K562 (cell line): ENCODE measurements at regions of chr1 and their contacts with region 1.

Region 1: GRCh38 chr1:179882243-179883039 is at the start of gene TOR1AIP1:
- DNase-seq: peak; percentile 91 to 99 (median 94)
- ATAC-seq: peak; percentile 88
- H3K4me3 ChIP-seq: peak within 1 kb of the TSS; percentile 87
- H3K27ac ChIP-seq: peak within 1 kb of the TSS; percentile 98
- H3K4me1 ChIP-seq: peaks cover 12% of the 10 kb centered on the region in 2 experiments; a peak in 4 of 5 replicates
- H3K27me3 ChIP-seq: no peaks in the 10 kb centered on the region
- CTCF ChIP-seq: peak; percentile 19 to 26 (median 20); a peak in 2 of 6 replicates
- EP300 ChIP-seq: peak; percentile 64; the same call in 1 of the 2 replicates
- POLR2A ChIP-seq: peak; percentile 98
- RAD21 ChIP-seq: peak; percentile 37 to 41
- polyA plus RNA-seq, gene TOR1AIP1: 27.1 to 38.0 TPM

Region 2: GRCh38 chr1:178774263-178774662 is 1108.2 kb before region 1 on chr1:
- CTCF ChIA-PET with region 1: no interaction called
- POLR2A ChIA-PET with region 1: no interaction called
- in situ Hi-C with region 1: no loop called
- intact Hi-C with region 1: no loop called
- DNase-seq: peak in 1 of 4 experiments; percentile 37
- ATAC-seq: peak; percentile 59; the same call in 1 of the 3 replicates
- H3K4me3 ChIP-seq: no peak overlapping the region
- H3K27ac ChIP-seq: no peak overlapping the region
- H3K4me1 ChIP-seq: no peaks in the 10 kb centered on the region
- H3K27me3 ChIP-seq: no peaks in the 10 kb centered on the region
- CTCF ChIP-seq: peak in 2 of 3 experiments; percentile 30 to 69; a peak in 3 of 6 replicates
- EP300 ChIP-seq: no peak
- POLR2A ChIP-seq: no peak
- RAD21 ChIP-seq: peak; percentile 78 to 81

Region 3: GRCh38 chr1:179803104-179803503 is 79.3 kb before region 1 on chr1:
- CTCF ChIA-PET with region 1: no interaction called
- POLR2A ChIA-PET with region 1: no interaction called
- in situ Hi-C with region 1: no loop called
- intact Hi-C with region 1: no loop called
- DNase-seq: no peak
- ATAC-seq: no peak
- H3K4me3 ChIP-seq: no peak overlapping the region
- H3K27ac ChIP-seq: no peak overlapping the region
- H3K4me1 ChIP-seq: peaks cover 0 to 4% of the 10 kb centered on the region in 2 experiments; a peak in 1 of 5 replicates
- H3K27me3 ChIP-seq: peaks cover 42 to 74% of the 10 kb centered on the region in 2 experiments
- CTCF ChIP-seq: no peak
- EP300 ChIP-seq: no peak
- POLR2A ChIP-seq: no peak
- RAD21 ChIP-seq: no peak

Region 4: DNA sequence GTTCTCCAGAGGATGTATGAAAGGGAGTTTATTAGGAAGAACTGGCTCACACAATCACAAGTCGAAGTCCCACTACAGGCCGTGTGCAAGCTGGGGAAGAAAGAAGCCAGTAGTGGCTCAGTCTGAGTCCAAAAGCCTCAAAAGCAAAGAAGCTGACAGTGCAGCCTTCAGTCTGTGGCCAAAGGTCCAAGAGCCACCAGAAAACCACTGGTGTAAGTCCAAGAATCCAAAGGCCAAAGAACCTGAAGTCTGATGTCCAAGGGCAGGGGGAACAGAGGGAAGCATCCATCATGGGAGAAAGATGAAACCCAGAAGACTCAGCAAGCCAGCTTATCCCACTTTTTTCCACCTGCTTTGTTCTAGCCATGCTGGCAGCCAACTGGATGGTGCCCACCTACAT is 50.8 kb after region 1 on chr1:
- CTCF ChIA-PET with region 1: no interaction called
- POLR2A ChIA-PET with region 1: interaction called, 10 read pairs
- in situ Hi-C with region 1: no loop called
- intact Hi-C with region 1: no loop called
- DNase-seq: no peak
- ATAC-seq: no peak
- H3K4me3 ChIP-seq: no peak overlapping the region
- H3K27ac ChIP-seq: no peak overlapping the region
- H3K4me1 ChIP-seq: peaks cover 0 to 6% of the 10 kb centered on the region in 2 experiments; a peak in 1 of 5 replicates
- H3K27me3 ChIP-seq: no peaks in the 10 kb centered on the region
- CTCF ChIP-seq: no peak
- EP300 ChIP-seq: no peak
- POLR2A ChIP-seq: no peak
- RAD21 ChIP-seq: no peak

Region 5: GRCh38 chr1:180057883-180058396 is 175.5 kb after region 1 on chr1:
- CTCF ChIA-PET with region 1: no interaction called
- POLR2A ChIA-PET with region 1: no interaction called
- in situ Hi-C with region 1: no loop called
- intact Hi-C with region 1: loop called (anchors 10 kb)
- DNase-seq: peak; percentile 15 to 46 (median 26)
- ATAC-seq: peak; percentile 91
- H3K4me3 ChIP-seq: no peak overlapping the region
- H3K27ac ChIP-seq: peak overlapping the region; percentile 61; the same call in 2 of the 3 replicates
- H3K4me1 ChIP-seq: peaks cover 0 to 13% of the 10 kb centered on the region in 2 experiments; a peak in 2 of 5 replicates
- H3K27me3 ChIP-seq: no peaks in the 10 kb centered on the region
- CTCF ChIP-seq: no peak
- EP300 ChIP-seq: peak; percentile 59
- POLR2A ChIP-seq: no peak
- RAD21 ChIP-seq: no peak

Region 6: DNA sequence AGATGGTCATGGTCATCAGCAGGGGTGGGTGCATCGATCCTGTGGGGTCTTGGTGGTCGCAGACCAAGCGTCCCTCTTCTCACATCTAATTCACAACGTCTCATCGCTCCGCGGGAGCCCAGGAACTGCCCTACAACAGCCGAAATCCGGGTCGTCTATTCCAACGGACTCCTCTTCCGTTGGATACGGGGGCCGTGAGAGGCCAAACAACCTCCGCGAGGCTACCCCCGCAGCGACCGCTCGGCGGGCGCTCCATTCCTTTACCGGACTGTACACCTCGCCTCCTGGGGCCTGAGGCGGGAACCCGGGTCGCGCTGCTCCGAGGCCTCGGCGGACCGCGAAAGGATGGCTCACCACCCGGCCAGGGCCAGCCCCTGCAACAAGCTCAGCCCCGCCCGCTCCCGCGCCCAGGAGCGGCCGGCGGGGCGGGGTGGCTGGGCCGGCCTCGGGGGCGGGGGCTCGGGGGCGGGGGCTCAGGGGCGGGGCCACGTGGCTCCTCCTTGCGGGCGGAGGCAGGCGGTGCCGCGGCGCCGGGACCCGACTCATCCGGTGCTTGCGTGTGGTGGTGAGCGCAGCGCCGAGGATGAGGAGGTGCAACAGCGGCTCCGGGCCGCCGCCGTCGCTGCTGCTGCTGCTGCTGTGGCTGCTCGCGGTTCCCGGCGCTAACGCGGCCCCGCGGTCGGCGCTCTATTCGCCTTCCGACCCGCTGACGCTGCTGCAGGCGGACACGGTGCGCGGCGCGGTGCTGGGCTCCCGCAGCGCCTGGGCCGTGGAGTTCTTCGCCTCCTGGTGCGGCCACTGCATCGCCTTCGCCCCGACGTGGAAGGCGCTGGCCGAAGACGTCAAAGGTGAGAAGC is 272.1 kb after region 1 on chr1 and contains the start of gene QSOX1:
- CTCF ChIA-PET with region 1: interaction called, 3 read pairs
- POLR2A ChIA-PET with region 1: no interaction called
- in situ Hi-C with region 1: no loop called
- intact Hi-C with region 1: loop called (anchors 5 kb)
- DNase-seq: peak; percentile 91 to 100 (median 99)
- ATAC-seq: peak; percentile 91
- H3K4me3 ChIP-seq: peak within 1 kb of the TSS; percentile 77
- H3K27ac ChIP-seq: peak within 1 kb of the TSS; percentile 77
- H3K4me1 ChIP-seq: peaks cover 33 to 37% of the 10 kb centered on the region in 2 experiments
- H3K27me3 ChIP-seq: no peaks in the 10 kb centered on the region
- CTCF ChIP-seq: peak in 2 of 3 experiments; percentile 10 to 48; a peak in 1 of 6 replicates
- EP300 ChIP-seq: peak; percentile 63; the same call in 1 of the 2 replicates
- POLR2A ChIP-seq: peak; percentile 85
- RAD21 ChIP-seq: no peak
- polyA plus RNA-seq, gene QSOX1: 4.0 to 4.6 TPM